GM12878 (cell line): ENCODE measurements at regions of chr10 and their contacts with region 1.

Region 1: DNA sequence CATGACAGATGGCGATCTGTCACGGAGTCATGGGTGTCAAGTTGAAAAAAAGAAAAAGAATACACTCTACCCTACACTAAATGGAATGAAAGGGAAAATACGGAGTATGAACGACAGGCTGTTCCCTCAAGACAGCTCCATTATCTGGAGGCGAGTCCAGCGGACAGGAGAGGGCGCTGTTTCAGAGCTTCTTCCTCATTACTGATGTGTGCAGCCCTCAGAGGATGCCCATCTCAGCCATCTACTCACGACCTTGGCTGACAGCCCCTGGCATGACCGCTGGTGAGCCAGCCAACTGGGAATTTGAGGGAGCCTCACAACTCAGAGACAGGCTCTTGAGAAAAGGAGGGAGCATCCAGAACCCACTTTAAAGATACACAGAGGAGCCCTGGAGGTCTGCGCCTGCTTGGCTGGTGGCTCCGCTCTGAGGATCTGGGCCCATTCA is 49.6 kb upstream of the SMNDC1 start:
- DNase-seq: peak; percentile 58
- ATAC-seq: peak; percentile 59
- H3K4me3 ChIP-seq: no peak overlapping the region
- H3K27ac ChIP-seq: peak overlapping the region; percentile 100
- H3K4me1 ChIP-seq: peaks cover 54% of the 10 kb centered on the region
- H3K27me3 ChIP-seq: no peaks in the 10 kb centered on the region
- CTCF ChIP-seq: peak; percentile 80 to 88 (median 87)
- EP300 ChIP-seq: no peak
- POLR2A ChIP-seq: no peak
- RAD21 ChIP-seq: peak; percentile 81

Region 2: DNA sequence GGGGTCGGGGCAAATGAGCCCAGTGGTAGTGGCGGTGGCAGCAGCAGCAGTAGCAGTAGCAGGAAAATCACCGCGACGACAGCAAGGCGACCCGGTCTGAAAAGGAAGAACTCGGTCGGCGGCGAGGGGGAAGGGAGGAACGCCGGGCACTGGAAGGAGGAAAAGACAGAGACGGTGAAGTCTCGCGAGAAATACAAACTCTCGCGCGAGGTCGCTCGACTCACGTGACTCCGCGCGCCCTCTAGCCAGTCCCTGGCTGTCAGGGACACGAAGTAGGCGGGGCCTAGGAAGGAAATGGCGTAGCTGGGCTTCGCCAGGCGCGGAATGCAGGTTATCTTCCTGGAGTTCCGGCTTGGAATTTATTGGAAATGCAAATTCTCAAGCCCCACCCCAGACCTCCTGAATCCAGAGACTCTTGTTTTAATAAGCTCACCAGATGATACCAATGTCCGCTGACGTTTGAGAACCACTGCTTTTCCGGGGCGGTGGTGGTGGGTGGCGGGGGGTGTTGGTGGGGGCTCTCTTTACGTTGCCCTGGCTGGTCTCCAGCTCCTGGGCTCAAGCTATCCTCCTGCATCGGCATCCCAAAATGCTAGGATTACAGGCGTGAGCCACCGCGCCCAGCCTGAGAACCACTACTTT is 49.4 kb before region 1 on chr10 and contains the start of gene SMNDC1:
- CTCF ChIA-PET with region 1: interaction called, 7 read pairs
- POLR2A ChIA-PET with region 1: interaction called, 10 read pairs
- RAD21 ChIA-PET with region 1: interaction called, 23 read pairs
- SMC1A ChIA-PET with region 1: interaction called, 15 read pairs
- in situ Hi-C with region 1: no loop called
- intact Hi-C with region 1: no loop called
- DNase-seq: peak; percentile 89
- ATAC-seq: peak; percentile 91
- H3K4me3 ChIP-seq: peak within 1 kb of the TSS; percentile 81
- H3K27ac ChIP-seq: peak within 1 kb of the TSS; percentile 88
- H3K4me1 ChIP-seq: peaks cover 7% of the 10 kb centered on the region; the same call in 1 of the 2 replicates
- H3K27me3 ChIP-seq: no peaks in the 10 kb centered on the region
- CTCF ChIP-seq: no peak
- EP300 ChIP-seq: no peak
- POLR2A ChIP-seq: peak; percentile 88
- RAD21 ChIP-seq: no peak
- polyA plus RNA-seq, gene SMNDC1: 10.1 to 12.9 TPM

Region 3: DNA sequence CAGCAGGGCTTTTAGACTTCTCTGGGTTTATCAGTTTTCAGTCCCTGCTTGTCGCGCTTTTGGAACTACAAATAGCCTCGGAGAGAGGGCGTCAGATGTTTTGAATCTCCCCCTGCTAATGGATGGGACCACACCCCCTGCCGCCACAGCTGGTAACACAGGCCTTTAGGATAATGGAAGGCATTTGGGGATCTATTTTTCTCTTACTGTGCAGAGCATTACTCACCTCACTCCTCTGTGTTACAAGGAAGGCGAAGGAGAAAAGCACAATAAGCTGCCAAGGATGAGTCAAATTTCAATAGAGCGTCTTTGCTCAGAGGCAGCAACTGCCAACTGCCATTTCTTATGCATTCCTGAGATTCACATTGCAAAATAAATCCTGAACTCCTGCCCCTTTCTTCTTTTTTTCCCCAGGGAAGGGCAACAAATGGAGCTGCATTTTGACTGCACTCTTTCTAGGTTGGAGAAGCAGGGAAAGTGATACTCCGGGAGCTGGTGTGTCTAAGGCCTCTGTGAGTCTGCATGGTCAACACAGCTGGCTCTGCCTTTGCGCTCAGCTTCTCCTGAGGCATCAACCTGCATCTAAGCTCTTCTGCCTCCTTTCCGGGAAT is 18.1 kb before region 1 on chr10:
- CTCF ChIA-PET with region 1: interaction called, 11 read pairs
- POLR2A ChIA-PET with region 1: interaction called, 7 read pairs
- RAD21 ChIA-PET with region 1: interaction called, 17 read pairs
- SMC1A ChIA-PET with region 1: interaction called, 23 read pairs
- in situ Hi-C with region 1: no loop called
- intact Hi-C with region 1: no loop called
- DNase-seq: no peak
- ATAC-seq: no peak
- H3K4me3 ChIP-seq: no peak overlapping the region
- H3K27ac ChIP-seq: no peak overlapping the region
- H3K4me1 ChIP-seq: no peaks in the 10 kb centered on the region
- H3K27me3 ChIP-seq: no peaks in the 10 kb centered on the region
- CTCF ChIP-seq: no peak
- EP300 ChIP-seq: no peak
- POLR2A ChIP-seq: no peak
- RAD21 ChIP-seq: no peak

Region 4: DNA sequence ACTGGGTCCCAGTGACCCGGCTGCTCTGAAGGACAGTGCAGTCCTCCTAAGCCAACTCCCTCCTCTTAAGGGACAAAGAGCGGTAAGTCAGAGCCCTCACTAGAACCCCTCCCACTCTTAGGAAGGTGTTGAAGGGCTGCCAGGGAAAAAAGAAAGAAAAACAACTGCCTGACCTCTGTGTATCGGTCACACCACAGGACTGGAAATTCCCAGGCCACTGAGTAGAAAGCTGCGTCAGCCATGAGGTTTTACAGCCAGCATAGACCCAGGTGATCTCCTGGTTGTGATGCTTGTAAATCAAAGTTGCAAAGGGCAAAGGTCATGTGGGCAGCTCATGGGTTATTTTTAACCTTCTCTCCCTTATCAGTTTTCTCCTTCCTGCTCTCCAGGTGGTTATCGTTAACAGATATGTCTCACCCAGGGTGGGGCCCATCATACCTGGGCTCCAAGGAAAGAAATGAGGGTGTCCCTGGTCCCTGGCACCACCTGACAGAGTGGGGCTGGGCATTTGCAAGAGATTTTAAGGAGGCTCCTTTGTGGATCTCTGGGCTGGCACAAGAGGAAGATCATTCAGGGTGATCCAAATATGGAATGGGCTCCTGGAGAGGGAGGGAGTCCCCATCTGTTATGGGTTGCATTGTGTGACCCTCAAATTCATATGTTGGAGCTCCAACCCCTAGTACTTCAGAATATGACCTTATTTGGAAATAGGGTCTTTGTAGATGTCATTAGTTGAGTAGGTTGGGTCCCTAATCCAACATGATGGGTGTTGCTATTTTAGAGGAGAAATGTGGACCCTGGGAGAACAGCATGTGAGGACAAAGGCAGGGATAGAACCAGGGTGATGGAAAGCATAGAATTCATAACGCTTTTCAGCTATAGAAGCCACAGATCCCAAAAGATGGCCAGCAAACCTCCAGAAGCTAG is 41.6 kb after region 1 on chr10:
- CTCF ChIA-PET with region 1: interaction called, 23 read pairs
- POLR2A ChIA-PET with region 1: interaction called, 20 read pairs
- RAD21 ChIA-PET with region 1: interaction called, 33 read pairs
- SMC1A ChIA-PET with region 1: interaction called, 55 read pairs
- in situ Hi-C with region 1: no loop called
- intact Hi-C with region 1: loop called (anchors 1 kb)
- DNase-seq: peak; percentile 91
- ATAC-seq: peak; percentile 92
- H3K4me3 ChIP-seq: no peak overlapping the region
- H3K27ac ChIP-seq: peak overlapping the region; percentile 69
- H3K4me1 ChIP-seq: peaks cover 16% of the 10 kb centered on the region
- H3K27me3 ChIP-seq: no peaks in the 10 kb centered on the region
- CTCF ChIP-seq: no peak
- EP300 ChIP-seq: peak; percentile 99 to 100
- POLR2A ChIP-seq: no peak
- RAD21 ChIP-seq: peak; percentile 24; the same call in 1 of the 2 replicates

Region 5: DNA sequence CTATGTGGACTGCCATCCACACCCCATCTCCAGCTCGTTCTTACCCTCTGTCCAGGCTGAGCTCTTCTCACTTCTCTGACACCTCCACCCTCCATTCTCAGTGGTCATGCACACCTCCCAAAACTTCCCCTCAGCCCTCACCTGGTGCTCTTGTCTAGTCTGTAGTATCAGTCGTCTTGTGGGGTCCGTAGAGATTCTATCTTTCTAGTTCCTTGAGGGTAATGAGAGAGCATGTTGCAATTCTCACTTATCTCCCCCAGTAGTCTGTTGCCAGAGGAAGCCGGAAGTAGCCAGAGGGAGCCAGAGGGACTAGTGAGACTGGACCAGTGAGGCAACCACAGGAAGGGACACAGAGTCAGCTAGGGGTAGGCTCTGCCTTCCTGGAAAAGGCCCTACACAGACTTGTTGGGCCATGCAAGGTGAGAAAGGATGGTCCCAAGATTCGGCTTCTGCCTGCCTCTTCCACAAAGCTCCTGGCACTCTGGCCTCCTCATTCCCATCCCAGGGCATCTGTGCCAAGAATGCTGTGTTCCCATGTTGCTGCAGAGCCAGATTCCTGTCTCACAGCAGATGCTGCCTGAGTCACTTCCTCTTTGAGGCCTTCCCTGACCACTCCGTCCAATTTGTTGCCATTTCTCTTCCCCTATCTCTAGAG is 92.7 kb after region 1 on chr10:
- CTCF ChIA-PET with region 1: interaction called, 8 read pairs
- POLR2A ChIA-PET with region 1: interaction called, 3 read pairs
- RAD21 ChIA-PET with region 1: interaction called, 12 read pairs
- SMC1A ChIA-PET with region 1: interaction called, 3 read pairs
- in situ Hi-C with region 1: no loop called
- intact Hi-C with region 1: no loop called
- DNase-seq: no peak
- ATAC-seq: no peak; the same call in 2 of the 3 replicates
- H3K4me3 ChIP-seq: no peak overlapping the region
- H3K27ac ChIP-seq: no peak overlapping the region
- H3K4me1 ChIP-seq: peaks cover 6% of the 10 kb centered on the region
- H3K27me3 ChIP-seq: no peaks in the 10 kb centered on the region; a peak in 1 of 4 replicates
- CTCF ChIP-seq: no peak
- EP300 ChIP-seq: no peak
- POLR2A ChIP-seq: no peak
- RAD21 ChIP-seq: no peak

Region 6: GRCh38 chr10:110530131-110530831 is 175.9 kb after region 1 on chr10:
- CTCF ChIA-PET with region 1: interaction called, 85 read pairs
- POLR2A ChIA-PET with region 1: interaction called, 6 read pairs
- RAD21 ChIA-PET with region 1: interaction called, 11 read pairs
- SMC1A ChIA-PET with region 1: interaction called, 54 read pairs
- in situ Hi-C with region 1: no loop called
- intact Hi-C with region 1: no loop called
- DNase-seq: no peak
- ATAC-seq: peak; percentile 35
- H3K4me3 ChIP-seq: peak overlapping the region; percentile 30; the same call in 1 of the 2 replicates
- H3K27ac ChIP-seq: 0 out of 2 replicates have a peak overlapping the region, but pooled peaks have one; percentile 18
- H3K4me1 ChIP-seq: peaks cover 36% of the 10 kb centered on the region
- H3K27me3 ChIP-seq: no peaks in the 10 kb centered on the region
- CTCF ChIP-seq: no peak
- EP300 ChIP-seq: no peak
- POLR2A ChIP-seq: no peak
- RAD21 ChIP-seq: no peak